ENCODE measurements at regions of chr4 and their contacts with region 1.

Region 1: GRCh38 chr4:48127682-48128394 is 6.2 kb downstream of the TXK start:
- DNase-seq: peak; percentile 30 to 78 (median 71)
- ATAC-seq: peak; percentile 82
- H3K4me3 ChIP-seq: peak overlapping the region; percentile 52
- H3K4me3 Mint-ChIP-seq: peak overlapping the region in 9 of 10 donors; percentile 80 to 99 (median 91)
- H3K27ac ChIP-seq: peak overlapping the region; percentile 79
- H3K27ac Mint-ChIP-seq: peak overlapping the region in 7 of 9 donors; percentile 89 to 97 (median 95)
- H3K4me1 ChIP-seq: peaks cover 32 to 81% of the 10 kb centered on the region in 2 donors
- H3K4me1 Mint-ChIP-seq: peaks cover 0 to 89% (median 84%) of the 10 kb centered on the region in 7 donors
- H3K27me3 ChIP-seq: no peaks in the 10 kb centered on the region
- H3K27me3 Mint-ChIP-seq: no peaks in the 10 kb centered on the region

Region 2: GRCh38 chr4:47122592-47123291 is 1005.1 kb before region 1 on chr4:
- CTCF ChIA-PET with region 1: no interaction called
- POLR2A ChIA-PET with region 1: no interaction called
- intact Hi-C with region 1: no loop called
- DNase-seq: peak in 5 of 9 donors; percentile 14 to 42 (median 24)
- ATAC-seq: peak; percentile 67
- H3K4me3 ChIP-seq: no peak overlapping the region
- H3K4me3 Mint-ChIP-seq: no peak overlapping the region
- H3K27ac ChIP-seq: no peak overlapping the region
- H3K27ac Mint-ChIP-seq: no peak overlapping the region
- H3K4me1 ChIP-seq: no peaks in the 10 kb centered on the region
- H3K4me1 Mint-ChIP-seq: no peaks in the 10 kb centered on the region
- H3K27me3 ChIP-seq: peaks cover 0 to 2% of the 10 kb centered on the region in 2 donors
- H3K27me3 Mint-ChIP-seq: peaks cover 0 to 18% (median 10%) of the 10 kb centered on the region in 5 donors

Region 3: GRCh38 chr4:48016141-48017103 is 111.4 kb before region 1 on chr4 and contains the starts of genes CNGA1 and NIPAL1:
- CTCF ChIA-PET with region 1: interaction called, 4 read pairs
- POLR2A ChIA-PET with region 1: no interaction called
- intact Hi-C with region 1: loop called in 1 of 2 experiments (anchors 5 kb)
- DNase-seq: peak; percentile 56 to 79 (median 65)
- ATAC-seq: peak; percentile 96
- H3K4me3 ChIP-seq: peak within 1 kb of the TSS; percentile 75
- H3K4me3 Mint-ChIP-seq: peak within 1 kb of the TSS; percentile 78 to 95 (median 86)
- H3K27ac ChIP-seq: peak within 1 kb of the TSS; percentile 17
- H3K27ac Mint-ChIP-seq: peak within 1 kb of the TSS in 5 of 9 donors; percentile 7 to 91 (median 50)
- H3K4me1 ChIP-seq: peaks cover 0 to 8% of the 10 kb centered on the region in 2 donors
- H3K4me1 Mint-ChIP-seq: peaks cover 6 to 12% (median 10%) of the 10 kb centered on the region in 7 donors
- H3K27me3 ChIP-seq: no peaks in the 10 kb centered on the region
- H3K27me3 Mint-ChIP-seq: peaks cover 3 to 32% (median 11%) of the 10 kb centered on the region in 5 donors
- total RNA-seq, gene CNGA1: not detected
- total RNA-seq, gene NIPAL1: 0.45 to 3.3 (median 1.9) TPM in 4 of 5 experiments, not detected in the other

Region 4: DNA sequence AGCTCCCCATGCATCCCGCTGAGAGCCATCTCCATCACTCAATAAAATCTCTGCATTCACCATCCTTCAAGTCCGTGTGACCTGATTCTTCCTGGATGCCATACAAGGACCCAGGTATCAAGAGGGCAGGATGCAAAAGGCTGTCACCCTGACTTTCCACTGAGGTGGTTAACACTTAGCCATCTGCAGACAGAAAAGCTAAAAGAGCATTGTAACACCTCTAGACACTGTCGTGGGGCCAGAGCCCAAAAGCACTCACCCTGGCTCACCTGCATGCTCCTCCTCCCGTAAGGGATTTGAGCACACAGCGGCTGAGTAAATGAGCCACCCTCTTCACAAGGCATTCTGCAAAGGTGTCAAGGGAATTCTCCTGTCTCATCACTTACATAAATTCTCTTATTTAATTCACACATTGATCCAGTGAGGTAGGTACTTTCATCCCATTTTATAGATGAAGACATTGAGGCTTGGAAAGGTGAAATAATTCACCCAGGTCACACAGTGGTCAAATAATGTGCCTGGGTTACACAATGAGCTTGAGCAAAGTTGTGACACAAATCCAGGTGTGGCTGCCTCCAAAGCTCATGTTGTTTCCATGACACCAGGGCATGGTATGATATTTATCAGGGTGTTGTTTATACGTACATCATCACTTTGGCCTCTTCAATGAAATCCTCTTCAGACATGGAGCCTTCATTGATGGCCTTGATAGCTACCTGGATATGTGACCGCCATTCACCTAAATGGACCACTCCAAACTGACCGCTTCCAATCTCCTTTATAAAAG is 41.8 kb before region 1 on chr4:
- CTCF ChIA-PET with region 1: no interaction called
- POLR2A ChIA-PET with region 1: no interaction called
- intact Hi-C with region 1: no loop called
- DNase-seq: no peak
- ATAC-seq: no peak
- H3K4me3 ChIP-seq: no peak overlapping the region
- H3K4me3 Mint-ChIP-seq: no peak overlapping the region
- H3K27ac ChIP-seq: no peak overlapping the region
- H3K27ac Mint-ChIP-seq: peak overlapping the region in 4 of 9 donors; percentile 36 to 78 (median 56)
- H3K4me1 ChIP-seq: no peaks in the 10 kb centered on the region
- H3K4me1 Mint-ChIP-seq: peaks cover 0 to 40% (median 14%) of the 10 kb centered on the region in 7 donors
- H3K27me3 ChIP-seq: no peaks in the 10 kb centered on the region
- H3K27me3 Mint-ChIP-seq: no peaks in the 10 kb centered on the region

Region 5: GRCh38 chr4:48109413-48110263 is 18.2 kb before region 1 on chr4:
- CTCF ChIA-PET with region 1: interaction called, 11 read pairs
- POLR2A ChIA-PET with region 1: interaction called, 11 read pairs
- intact Hi-C with region 1: loop called in 1 of 2 experiments (anchors 1 kb)
- DNase-seq: peak in 7 of 9 donors; percentile 19 to 61 (median 49)
- ATAC-seq: peak; percentile 82
- H3K4me3 ChIP-seq: no peak overlapping the region
- H3K4me3 Mint-ChIP-seq: no peak overlapping the region
- H3K27ac ChIP-seq: no peak overlapping the region
- H3K27ac Mint-ChIP-seq: peak overlapping the region in 8 of 9 donors; percentile 0 to 80 (median 58)
- H3K4me1 ChIP-seq: peaks cover 0 to 19% of the 10 kb centered on the region in 2 donors
- H3K4me1 Mint-ChIP-seq: peaks cover 35 to 72% (median 56%) of the 10 kb centered on the region in 7 donors
- H3K27me3 ChIP-seq: no peaks in the 10 kb centered on the region
- H3K27me3 Mint-ChIP-seq: no peaks in the 10 kb centered on the region

Region 6: GRCh38 chr4:48269861-48270522 is 142.2 kb after region 1 on chr4:
- CTCF ChIA-PET with region 1: no interaction called
- POLR2A ChIA-PET with region 1: no interaction called
- intact Hi-C with region 1: loop called in 1 of 2 experiments (anchors 1 kb)
- DNase-seq: peak; percentile 48 to 88 (median 69)
- ATAC-seq: peak; percentile 95
- H3K4me3 ChIP-seq: peak overlapping the region; percentile 88
- H3K4me3 Mint-ChIP-seq: peak overlapping the region; percentile 95 to 98 (median 97)
- H3K27ac ChIP-seq: peak overlapping the region; percentile 73
- H3K27ac Mint-ChIP-seq: peak overlapping the region; percentile 20 to 94 (median 86)
- H3K4me1 ChIP-seq: peaks cover 0 to 6% of the 10 kb centered on the region in 2 donors
- H3K4me1 Mint-ChIP-seq: peaks cover 6 to 28% (median 22%) of the 10 kb centered on the region in 7 donors
- H3K27me3 ChIP-seq: no peaks in the 10 kb centered on the region
- H3K27me3 Mint-ChIP-seq: no peaks in the 10 kb centered on the region

Region 7: DNA sequence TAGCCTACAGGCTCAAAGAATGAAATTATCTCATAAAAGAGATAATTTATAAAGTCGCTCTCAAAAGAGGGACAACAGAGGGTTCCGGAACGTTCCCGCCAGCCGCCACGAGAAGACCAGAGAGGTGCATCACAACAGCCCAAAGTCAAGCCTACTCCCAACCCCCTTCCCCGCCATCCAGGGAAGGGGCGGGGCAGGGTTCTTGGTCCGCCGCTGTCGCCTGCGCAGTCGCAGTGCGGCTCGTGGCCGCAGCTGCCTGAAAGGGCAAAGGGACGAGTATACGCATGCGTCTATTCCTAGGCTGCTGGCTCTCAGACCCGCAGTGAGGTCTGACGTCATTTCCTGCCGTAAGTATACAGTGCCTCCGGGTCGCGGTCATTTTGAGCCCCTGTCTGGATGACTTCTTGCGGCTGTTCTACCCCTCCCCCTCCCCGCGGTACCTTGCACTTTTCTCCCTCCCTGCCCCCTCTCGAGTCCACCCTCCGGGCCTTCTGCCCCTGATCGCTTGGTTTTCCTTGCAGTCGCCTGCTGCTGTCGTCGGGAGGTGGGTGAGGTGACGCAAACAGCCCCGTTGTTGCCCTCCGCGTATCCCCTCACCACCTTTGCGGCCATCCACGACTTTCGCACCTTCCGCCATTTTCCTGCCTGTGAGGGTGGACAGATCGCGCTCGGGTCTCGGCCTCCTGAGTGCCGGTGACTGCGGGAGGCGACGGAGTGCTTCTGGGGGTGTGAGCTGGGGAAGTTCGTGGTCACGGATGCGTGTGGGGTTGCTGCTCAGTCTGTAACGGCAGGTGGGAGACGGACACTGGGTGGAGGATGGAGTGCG is 703.1 kb after region 1 on chr4 and contains the start of gene OCIAD1:
- CTCF ChIA-PET with region 1: no interaction called
- POLR2A ChIA-PET with region 1: no interaction called
- intact Hi-C with region 1: loop called in 1 of 2 experiments (anchors 5 kb)
- DNase-seq: peak; percentile 80 to 98 (median 93)
- ATAC-seq: peak; percentile 98
- H3K4me3 ChIP-seq: peak within 1 kb of the TSS; percentile 98
- H3K4me3 Mint-ChIP-seq: peak within 1 kb of the TSS; percentile 96 to 100 (median 100)
- H3K27ac ChIP-seq: peak within 1 kb of the TSS; percentile 91
- H3K27ac Mint-ChIP-seq: peak within 1 kb of the TSS; percentile 98 to 100 (median 100)
- H3K4me1 ChIP-seq: peaks cover 10 to 12% of the 10 kb centered on the region in 2 donors
- H3K4me1 Mint-ChIP-seq: peaks cover 10 to 44% (median 36%) of the 10 kb centered on the region in 7 donors
- H3K27me3 ChIP-seq: no peaks in the 10 kb centered on the region
- H3K27me3 Mint-ChIP-seq: peaks cover 0 to 4% (median 4%) of the 10 kb centered on the region in 5 donors
- total RNA-seq, gene OCIAD1: 85.6 to 128 (median 102) TPM

Measured in naive thymus-derived CD4-positive, alpha-beta T cell (primary cell).